Activated B cell treated with CpG ODN at 0.5 μM for 24 hours (primary cell): ENCODE measurements at regions of chr3 and their contacts with region 1.

Region 1: GRCh38 chr3:186540221-186540834 is 3.9 kb downstream of the CRYGS start:
- DNase-seq: peak; percentile 55
- ATAC-seq: peak; percentile 88
- H3K4me3 Mint-ChIP-seq: no peak overlapping the region
- H3K27ac Mint-ChIP-seq: no peak overlapping the region
- H3K4me1 Mint-ChIP-seq: peaks cover 35% of the 10 kb centered on the region
- H3K27me3 Mint-ChIP-seq: no peaks in the 10 kb centered on the region
- CTCF ChIP-seq: no peak

Region 2: GRCh38 chr3:185846037-185846436 is 694.3 kb before region 1 on chr3:
- CTCF ChIA-PET with region 1: no interaction called
- POLR2A ChIA-PET with region 1: no interaction called
- intact Hi-C with region 1: no loop called
- DNase-seq: no peak
- ATAC-seq: no peak
- H3K4me3 Mint-ChIP-seq: no peak overlapping the region
- H3K27ac Mint-ChIP-seq: no peak overlapping the region
- H3K4me1 Mint-ChIP-seq: no peaks in the 10 kb centered on the region
- H3K27me3 Mint-ChIP-seq: peaks cover 18% of the 10 kb centered on the region
- CTCF ChIP-seq: no peak

Region 3: GRCh38 chr3:185976977-185977678 is 563.2 kb before region 1 on chr3:
- CTCF ChIA-PET with region 1: interaction called, 77 read pairs
- POLR2A ChIA-PET with region 1: interaction called, 4 read pairs
- intact Hi-C with region 1: loop called (anchors 1 kb)
- DNase-seq: peak; percentile 76
- ATAC-seq: peak; percentile 96
- H3K4me3 Mint-ChIP-seq: no peak overlapping the region
- H3K27ac Mint-ChIP-seq: no peak overlapping the region
- H3K4me1 Mint-ChIP-seq: peaks cover 6% of the 10 kb centered on the region
- H3K27me3 Mint-ChIP-seq: peaks cover 4% of the 10 kb centered on the region
- CTCF ChIP-seq: peak; percentile 64

Region 4: DNA sequence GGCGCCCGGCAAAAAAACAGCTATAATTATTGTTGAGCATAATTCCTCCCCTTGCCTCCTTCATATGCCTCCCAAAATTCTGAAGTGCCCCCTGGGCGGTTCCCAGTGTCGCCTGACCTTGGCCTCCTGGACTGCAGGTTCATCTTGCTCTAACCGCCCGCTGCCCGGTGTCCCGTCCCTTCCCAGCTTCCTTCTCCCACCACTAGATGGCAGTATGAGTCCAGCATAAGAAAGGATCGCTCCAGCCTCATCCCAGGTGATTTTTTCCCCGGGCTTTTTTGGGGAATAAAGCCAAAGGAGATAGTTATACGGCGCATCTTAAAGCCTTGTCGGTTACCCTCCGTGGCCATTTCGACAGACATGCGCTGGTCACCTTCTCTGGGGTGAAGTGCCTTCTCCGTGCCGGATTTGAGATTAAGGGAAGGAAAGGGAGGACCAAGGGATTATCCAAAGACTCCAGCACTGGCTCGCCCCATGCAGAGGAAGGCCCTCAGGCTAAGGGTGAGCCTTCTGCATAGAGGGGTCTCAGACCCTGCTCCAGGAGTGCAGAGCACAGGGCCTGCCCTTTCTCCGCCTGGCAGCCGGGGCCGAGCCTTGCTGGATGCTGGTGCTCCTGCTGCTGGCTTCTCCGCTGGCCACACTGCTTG is 556.7 kb before region 1 on chr3:
- CTCF ChIA-PET with region 1: interaction called, 77 read pairs
- POLR2A ChIA-PET with region 1: interaction called, 4 read pairs
- intact Hi-C with region 1: loop called (anchors 1 kb)
- DNase-seq: peak; percentile 37
- ATAC-seq: peak; percentile 82
- H3K4me3 Mint-ChIP-seq: no peak overlapping the region
- H3K27ac Mint-ChIP-seq: peak overlapping the region; percentile 30
- H3K4me1 Mint-ChIP-seq: peaks cover 4% of the 10 kb centered on the region
- H3K27me3 Mint-ChIP-seq: peaks cover 14% of the 10 kb centered on the region
- CTCF ChIP-seq: peak; percentile 91

Region 5: GRCh38 chr3:186283096-186283495 is 257.2 kb before region 1 on chr3:
- CTCF ChIA-PET with region 1: no interaction called
- POLR2A ChIA-PET with region 1: no interaction called
- intact Hi-C with region 1: no loop called
- DNase-seq: no peak
- ATAC-seq: no peak
- H3K4me3 Mint-ChIP-seq: no peak overlapping the region
- H3K27ac Mint-ChIP-seq: no peak overlapping the region
- H3K4me1 Mint-ChIP-seq: peaks cover 14% of the 10 kb centered on the region
- H3K27me3 Mint-ChIP-seq: no peaks in the 10 kb centered on the region
- CTCF ChIP-seq: no peak

Region 6: GRCh38 chr3:186901135-186901734 is 360.9 kb after region 1 on chr3:
- CTCF ChIA-PET with region 1: no interaction called
- POLR2A ChIA-PET with region 1: no interaction called
- intact Hi-C with region 1: no loop called
- DNase-seq: no peak
- ATAC-seq: peak; percentile 68
- H3K4me3 Mint-ChIP-seq: no peak overlapping the region
- H3K27ac Mint-ChIP-seq: peak overlapping the region; percentile 80
- H3K4me1 Mint-ChIP-seq: peaks cover 34% of the 10 kb centered on the region
- H3K27me3 Mint-ChIP-seq: no peaks in the 10 kb centered on the region
- CTCF ChIP-seq: no peak